CD8-positive, alpha-beta T cell (primary cell): ENCODE measurements at regions of chr22 and their contacts with region 1.

Region 1: GRCh38 chr22:19432133-19432851 is at the start of gene MRPL40:
- DNase-seq: peak; percentile 61 to 93 (median 88)
- ATAC-seq: peak; percentile 82
- H3K4me3 ChIP-seq: peak within 1 kb of the TSS; percentile 73 to 88
- H3K4me3 Mint-ChIP-seq: peak within 1 kb of the TSS; percentile 91
- H3K27ac ChIP-seq: peak within 1 kb of the TSS; percentile 90 to 96
- H3K27ac Mint-ChIP-seq: peak within 1 kb of the TSS; percentile 93
- H3K4me1 ChIP-seq: peaks cover 25% of the 10 kb centered on the region
- H3K4me1 Mint-ChIP-seq: peaks cover 42% of the 10 kb centered on the region
- H3K27me3 ChIP-seq: no peaks in the 10 kb centered on the region
- H3K27me3 Mint-ChIP-seq: no peaks in the 10 kb centered on the region
- CTCF ChIP-seq: no peak
- total RNA-seq, gene MRPL40: 9.9 to 10.5 TPM

Region 2: DNA sequence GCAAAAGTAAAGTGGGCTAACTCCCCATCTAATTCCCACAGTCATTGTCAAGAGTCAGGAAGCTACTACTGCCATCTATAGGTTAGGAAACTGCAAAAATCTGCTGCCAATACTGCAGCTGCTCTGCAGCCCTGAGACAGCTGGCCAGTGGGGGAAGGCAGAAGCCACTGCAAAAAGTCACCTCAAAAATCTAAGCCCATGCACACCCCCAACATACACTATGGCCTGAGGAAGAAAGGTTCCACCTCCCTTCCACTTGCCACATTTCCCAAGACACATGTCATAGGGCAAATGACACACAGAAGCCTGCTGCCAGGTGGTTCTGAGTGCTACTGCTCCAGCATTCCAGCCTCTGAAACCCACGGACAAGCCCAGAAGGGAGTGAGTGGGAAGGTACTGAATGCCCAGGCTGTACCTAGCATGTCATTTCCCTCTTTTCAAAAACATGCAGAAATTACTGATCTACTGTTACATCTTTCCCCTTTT is 347.0 kb before region 1 on chr22:
- CTCF ChIA-PET with region 1: no interaction called
- POLR2A ChIA-PET with region 1: no interaction called
- intact Hi-C with region 1: no loop called
- DNase-seq: no peak
- ATAC-seq: no peak
- H3K4me3 ChIP-seq: no peak overlapping the region
- H3K4me3 Mint-ChIP-seq: no peak overlapping the region
- H3K27ac ChIP-seq: no peak overlapping the region
- H3K27ac Mint-ChIP-seq: peak overlapping the region; percentile 11
- H3K4me1 ChIP-seq: no peaks in the 10 kb centered on the region
- H3K4me1 Mint-ChIP-seq: peaks cover 39% of the 10 kb centered on the region
- H3K27me3 ChIP-seq: no peaks in the 10 kb centered on the region
- H3K27me3 Mint-ChIP-seq: no peaks in the 10 kb centered on the region
- CTCF ChIP-seq: no peak

Region 3: GRCh38 chr22:19178656-19179496 is 253.4 kb before region 1 on chr22 and contains the start of gene SLC25A1:
- CTCF ChIA-PET with region 1: no interaction called
- POLR2A ChIA-PET with region 1: no interaction called
- intact Hi-C with region 1: loop called in 1 of 2 experiments (anchors 2 kb)
- DNase-seq: peak in 8 of 9 experiments; percentile 54 to 87 (median 78)
- ATAC-seq: peak; percentile 67
- H3K4me3 ChIP-seq: peak within 1 kb of the TSS; percentile 68 to 74
- H3K4me3 Mint-ChIP-seq: peak within 1 kb of the TSS; percentile 84
- H3K27ac ChIP-seq: peak within 1 kb of the TSS; percentile 42 to 65
- H3K27ac Mint-ChIP-seq: peak within 1 kb of the TSS; percentile 84
- H3K4me1 ChIP-seq: peaks cover 24% of the 10 kb centered on the region
- H3K4me1 Mint-ChIP-seq: peaks cover 22% of the 10 kb centered on the region
- H3K27me3 ChIP-seq: no peaks in the 10 kb centered on the region
- H3K27me3 Mint-ChIP-seq: no peaks in the 10 kb centered on the region
- CTCF ChIP-seq: no peak
- total RNA-seq, gene SLC25A1: 14.5 to 15.9 TPM

Region 4: DNA sequence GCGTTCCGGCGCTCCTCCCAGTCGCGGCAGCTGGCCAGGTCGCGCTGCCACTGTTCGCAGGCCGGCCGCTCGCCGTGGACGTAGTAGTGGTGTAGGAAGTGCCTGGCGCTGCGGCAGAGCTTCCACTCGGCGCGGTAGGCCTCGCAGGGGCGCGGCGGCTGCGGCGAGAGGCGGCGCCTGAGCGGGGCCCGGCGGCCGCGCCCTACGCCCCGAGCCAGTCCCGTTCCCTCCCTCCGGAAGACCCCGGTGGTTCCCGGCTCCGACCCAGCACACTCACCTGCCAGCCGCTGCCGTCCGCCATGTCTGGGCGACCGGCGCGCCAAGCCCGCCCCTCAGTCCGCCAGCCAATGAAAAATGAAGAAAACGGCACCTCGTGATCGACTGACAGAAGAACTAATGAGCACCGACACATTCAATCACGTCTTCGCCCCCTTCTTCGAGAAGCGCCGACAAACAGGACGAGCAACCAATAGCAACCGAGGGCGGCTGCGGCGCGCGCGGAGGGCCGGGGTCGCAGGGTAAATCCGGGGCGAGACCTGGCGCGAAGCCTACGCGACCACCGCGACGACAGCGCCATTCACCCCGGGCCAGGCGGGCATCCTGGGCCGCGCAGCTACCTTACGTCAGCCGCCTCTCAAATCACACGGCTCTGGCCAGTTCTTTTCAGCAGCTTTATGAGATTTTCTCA is 15.2 kb after region 1 on chr22 and contains the start of gene C22orf39:
- CTCF ChIA-PET with region 1: interaction called, 4 read pairs
- POLR2A ChIA-PET with region 1: interaction called, 28 read pairs
- intact Hi-C with region 1: loop called (anchors 1 kb)
- DNase-seq: peak; percentile 72 to 95 (median 87)
- ATAC-seq: peak; percentile 90
- H3K4me3 ChIP-seq: peak within 1 kb of the TSS; percentile 78 to 93
- H3K4me3 Mint-ChIP-seq: peak within 1 kb of the TSS; percentile 92
- H3K27ac ChIP-seq: peak within 1 kb of the TSS; percentile 85 to 92
- H3K27ac Mint-ChIP-seq: peak within 1 kb of the TSS; percentile 93
- H3K4me1 ChIP-seq: peaks cover 27% of the 10 kb centered on the region
- H3K4me1 Mint-ChIP-seq: peaks cover 42% of the 10 kb centered on the region
- H3K27me3 ChIP-seq: no peaks in the 10 kb centered on the region
- H3K27me3 Mint-ChIP-seq: no peaks in the 10 kb centered on the region
- CTCF ChIP-seq: no peak
- total RNA-seq, gene C22orf39: 31.0 to 34.1 TPM

Region 5: GRCh38 chr22:19503869-19504268 is 71.6 kb after region 1 on chr22:
- CTCF ChIA-PET with region 1: no interaction called
- POLR2A ChIA-PET with region 1: no interaction called
- intact Hi-C with region 1: no loop called
- DNase-seq: no peak
- ATAC-seq: no peak
- H3K4me3 ChIP-seq: no peak overlapping the region
- H3K4me3 Mint-ChIP-seq: no peak overlapping the region
- H3K27ac ChIP-seq: no peak overlapping the region
- H3K27ac Mint-ChIP-seq: no peak overlapping the region
- H3K4me1 ChIP-seq: peaks cover 12% of the 10 kb centered on the region
- H3K4me1 Mint-ChIP-seq: peaks cover 14% of the 10 kb centered on the region
- H3K27me3 ChIP-seq: no peaks in the 10 kb centered on the region
- H3K27me3 Mint-ChIP-seq: no peaks in the 10 kb centered on the region
- CTCF ChIP-seq: no peak

Region 6: GRCh38 chr22:19546680-19547079 is 114.4 kb after region 1 on chr22:
- CTCF ChIA-PET with region 1: no interaction called
- POLR2A ChIA-PET with region 1: no interaction called
- intact Hi-C with region 1: no loop called
- DNase-seq: no peak
- ATAC-seq: no peak
- H3K4me3 ChIP-seq: no peak overlapping the region
- H3K4me3 Mint-ChIP-seq: no peak overlapping the region
- H3K27ac ChIP-seq: no peak overlapping the region
- H3K27ac Mint-ChIP-seq: no peak overlapping the region
- H3K4me1 ChIP-seq: no peaks in the 10 kb centered on the region
- H3K4me1 Mint-ChIP-seq: no peaks in the 10 kb centered on the region
- H3K27me3 ChIP-seq: no peaks in the 10 kb centered on the region
- H3K27me3 Mint-ChIP-seq: no peaks in the 10 kb centered on the region
- CTCF ChIP-seq: no peak

Region 7: DNA sequence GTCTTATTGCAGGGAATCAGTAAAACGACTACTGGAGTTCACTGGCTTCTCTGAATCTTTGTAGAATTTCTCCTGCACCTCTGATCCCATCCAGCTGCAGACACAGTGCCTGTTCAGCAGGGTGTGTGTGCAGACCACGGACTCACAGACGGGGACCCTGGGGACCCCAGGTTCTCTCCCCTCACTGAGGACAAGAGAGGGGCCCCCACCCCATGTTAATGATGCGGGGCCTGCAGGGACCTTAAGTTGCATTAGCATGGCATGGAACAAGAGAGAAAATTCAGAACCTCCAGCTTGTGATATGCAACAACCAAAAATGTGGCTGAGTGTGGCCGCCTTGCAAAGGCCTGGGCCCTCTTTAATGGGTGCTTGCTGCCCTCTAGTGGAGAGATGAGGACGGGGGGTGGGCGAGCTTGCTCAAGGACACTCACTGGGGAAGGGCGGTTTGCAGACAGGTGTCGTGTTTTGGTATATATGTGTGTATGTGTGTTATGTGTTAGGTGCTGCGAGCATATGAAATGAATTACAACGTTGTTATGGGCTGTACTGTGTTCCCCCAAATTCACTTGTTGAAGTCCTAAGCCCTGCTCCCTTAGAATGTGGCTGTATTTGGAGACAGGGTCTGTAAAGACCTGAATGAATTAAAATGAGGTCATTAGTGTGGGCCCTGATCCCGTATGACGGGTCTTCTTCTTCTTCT is 197.6 kb after region 1 on chr22:
- CTCF ChIA-PET with region 1: interaction called, 4 read pairs
- POLR2A ChIA-PET with region 1: no interaction called
- intact Hi-C with region 1: loop called in 1 of 2 experiments (anchors 5 kb)
- DNase-seq: peak; percentile 74 to 92 (median 84)
- ATAC-seq: peak; percentile 94
- H3K4me3 ChIP-seq: no peak overlapping the region
- H3K4me3 Mint-ChIP-seq: no peak overlapping the region
- H3K27ac ChIP-seq: no peak overlapping the region
- H3K27ac Mint-ChIP-seq: no peak overlapping the region
- H3K4me1 ChIP-seq: peaks cover 3% of the 10 kb centered on the region
- H3K4me1 Mint-ChIP-seq: peaks cover 3% of the 10 kb centered on the region
- H3K27me3 ChIP-seq: no peaks in the 10 kb centered on the region
- H3K27me3 Mint-ChIP-seq: peaks cover 1% of the 10 kb centered on the region
- CTCF ChIP-seq: peak; percentile 78